ENCODE measurements at regions of chr6 and their contacts with region 1.

Region 1: DNA sequence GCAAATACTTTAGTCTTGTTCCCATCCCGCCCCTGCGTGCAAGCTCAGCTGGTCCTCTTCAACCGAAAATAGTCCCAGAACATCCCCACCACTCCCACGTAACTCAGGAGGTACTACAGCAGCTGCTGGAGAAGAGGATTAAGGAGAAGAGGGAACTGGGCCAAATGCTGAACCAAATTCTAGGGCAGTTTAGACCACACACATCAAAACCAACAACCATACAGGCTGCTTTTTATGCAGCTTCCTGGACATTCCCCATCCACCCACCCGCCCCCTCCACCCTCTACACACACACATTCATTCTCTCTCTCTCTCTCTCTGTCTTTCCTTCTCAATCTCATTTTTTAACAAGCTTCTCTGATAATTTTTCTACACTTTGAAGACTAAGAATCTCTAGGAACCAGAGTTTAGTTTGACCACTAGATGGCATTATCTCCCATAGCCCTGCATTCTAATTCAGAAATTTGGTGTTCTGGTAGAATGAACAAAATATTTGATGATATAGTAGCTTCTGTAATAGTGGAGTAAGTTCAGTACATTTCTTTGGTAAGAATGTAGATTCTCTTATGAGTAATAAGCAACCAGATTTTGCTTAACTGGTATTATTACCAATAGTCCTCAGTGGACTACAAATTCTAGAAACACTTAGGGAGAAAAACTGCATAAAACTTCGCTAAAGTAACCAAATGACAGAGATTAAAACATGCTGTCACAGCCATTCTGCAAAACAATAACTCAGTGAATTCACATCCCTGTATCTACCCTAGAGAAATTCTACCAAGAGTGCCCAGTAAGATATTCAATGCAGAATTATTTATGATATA is 52.1 kb upstream of the BEND6 start:
- DNase-seq: no peak
- H3K4me3 Mint-ChIP-seq: no peak overlapping the region
- H3K27ac Mint-ChIP-seq: no peak overlapping the region
- H3K4me1 Mint-ChIP-seq: no peaks in the 10 kb centered on the region
- H3K27me3 Mint-ChIP-seq: peaks cover 21% of the 10 kb centered on the region

Region 2: GRCh38 chr6:56659721-56660380 is 243.0 kb before region 1 on chr6:
- CTCF ChIA-PET with region 1: no interaction called
- DNase-seq: no peak
- H3K4me3 Mint-ChIP-seq: no peak overlapping the region
- H3K27ac Mint-ChIP-seq: no peak overlapping the region
- H3K4me1 Mint-ChIP-seq: peaks cover 14% of the 10 kb centered on the region
- H3K27me3 Mint-ChIP-seq: peaks cover 3% of the 10 kb centered on the region

Region 3: GRCh38 chr6:56890683-56891429 is 12.0 kb before region 1 on chr6:
- CTCF ChIA-PET with region 1: interaction called, 32 read pairs
- DNase-seq: no peak
- H3K4me3 Mint-ChIP-seq: no peak overlapping the region
- H3K27ac Mint-ChIP-seq: no peak overlapping the region
- H3K4me1 Mint-ChIP-seq: peaks cover 33% of the 10 kb centered on the region
- H3K27me3 Mint-ChIP-seq: no peaks in the 10 kb centered on the region

Region 4: GRCh38 chr6:56914798-56915658 is 12.2 kb after region 1 on chr6:
- CTCF ChIA-PET with region 1: interaction called, 17 read pairs
- DNase-seq: no peak
- H3K4me3 Mint-ChIP-seq: no peak overlapping the region
- H3K27ac Mint-ChIP-seq: no peak overlapping the region
- H3K4me1 Mint-ChIP-seq: no peaks in the 10 kb centered on the region
- H3K27me3 Mint-ChIP-seq: no peaks in the 10 kb centered on the region

Region 5: DNA sequence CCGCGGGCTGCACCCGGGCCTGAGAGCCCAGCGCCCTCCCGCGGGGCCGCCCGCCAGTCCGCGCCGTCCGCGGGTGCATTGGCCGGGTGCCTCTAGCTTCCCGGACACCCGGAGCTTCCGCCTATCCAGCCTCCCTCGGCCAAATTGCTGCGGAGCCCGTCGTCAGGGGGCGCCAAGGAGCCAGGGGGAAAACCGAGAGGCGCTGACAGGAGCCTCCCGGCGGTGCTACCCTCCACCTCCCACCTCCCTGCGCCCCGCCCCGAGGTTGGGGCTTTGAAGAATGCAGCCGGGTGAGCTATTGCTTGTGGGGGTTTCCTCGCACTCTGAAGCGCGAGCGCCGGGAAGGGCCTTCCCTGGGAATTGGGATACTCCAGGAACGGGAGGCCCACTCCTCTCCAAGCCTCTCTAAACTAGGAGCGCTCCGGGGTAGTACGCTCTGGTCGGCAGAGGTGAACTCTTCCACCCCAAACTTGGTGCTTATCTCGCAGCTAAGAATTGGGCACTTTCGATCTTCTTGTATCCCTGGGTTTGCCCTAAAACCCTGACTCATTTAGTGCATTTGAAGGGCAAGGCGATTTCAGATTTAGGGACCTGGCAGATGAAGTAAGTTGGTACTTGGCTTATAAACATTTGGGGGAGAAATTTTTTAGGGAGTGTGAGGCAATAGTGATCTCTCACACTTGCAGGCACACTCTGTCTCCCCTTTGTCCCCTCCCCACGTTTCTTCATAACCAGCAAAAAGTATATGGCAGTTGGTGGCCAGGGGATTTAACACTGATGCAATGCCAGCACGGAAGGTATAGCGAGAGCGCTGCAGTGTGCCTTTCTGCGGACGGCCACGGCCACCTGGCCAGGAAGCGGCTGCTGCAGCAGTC is 52.6 kb after region 1 on chr6:
- CTCF ChIA-PET with region 1: interaction called, 26 read pairs
- DNase-seq: peak; percentile 75
- H3K4me3 Mint-ChIP-seq: peak overlapping the region; percentile 78
- H3K27ac Mint-ChIP-seq: peak overlapping the region; percentile 64
- H3K4me1 Mint-ChIP-seq: peaks cover 22% of the 10 kb centered on the region
- H3K27me3 Mint-ChIP-seq: peaks cover 66% of the 10 kb centered on the region

Region 6: GRCh38 chr6:57316581-57317059 is 413.8 kb after region 1 on chr6:
- CTCF ChIA-PET with region 1: interaction called, 109 read pairs
- DNase-seq: peak; percentile 89
- H3K4me3 Mint-ChIP-seq: peak overlapping the region; percentile 100
- H3K27ac Mint-ChIP-seq: peak overlapping the region; percentile 94
- H3K4me1 Mint-ChIP-seq: peaks cover 41% of the 10 kb centered on the region
- H3K27me3 Mint-ChIP-seq: peaks cover 17% of the 10 kb centered on the region